ENCODE measurements at regions of chr2 and their contacts with region 1.

Region 1: GRCh38 chr2:37802899-37803379 is 122.1 kb upstream of the RMDN2 start:
- DNase-seq: peak in 1 of 2 experiments; percentile 70
- H3K4me3 ChIP-seq: no peak overlapping the region
- H3K4me3 Mint-ChIP-seq: peak overlapping the region; percentile 19
- H3K27ac Mint-ChIP-seq: peak overlapping the region; percentile 77
- H3K4me1 ChIP-seq: peaks cover 47% of the 10 kb centered on the region
- H3K4me1 Mint-ChIP-seq: peaks cover 38% of the 10 kb centered on the region
- H3K27me3 ChIP-seq: no peaks in the 10 kb centered on the region
- H3K27me3 Mint-ChIP-seq: no peaks in the 10 kb centered on the region
- CTCF ChIP-seq: no peak

Region 2: DNA sequence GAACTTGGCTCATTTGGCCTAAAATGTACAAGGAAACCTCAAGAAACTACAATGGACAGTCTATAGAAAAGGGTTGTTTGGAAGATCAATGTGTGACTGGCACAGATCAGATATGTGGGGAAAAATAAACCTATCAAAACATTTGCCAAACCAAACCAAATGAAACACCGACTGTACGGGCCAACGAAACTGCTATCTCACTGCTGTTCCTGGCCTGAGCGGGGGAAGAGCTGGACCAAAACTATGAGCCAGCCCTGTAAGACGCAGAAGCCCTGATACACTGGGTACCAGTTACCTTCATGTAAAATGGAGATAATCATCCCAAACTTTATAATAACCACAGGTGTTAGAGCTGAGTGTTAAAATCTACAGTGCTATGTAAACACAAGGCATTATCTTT is 143.2 kb before region 1 on chr2:
- CTCF ChIA-PET with region 1: no interaction called
- POLR2A ChIA-PET with region 1: no interaction called
- intact Hi-C with region 1: loop called (anchors 1 kb)
- DNase-seq: no peak
- H3K4me3 ChIP-seq: no peak overlapping the region
- H3K4me3 Mint-ChIP-seq: peak overlapping the region; percentile 47
- H3K27ac Mint-ChIP-seq: peak overlapping the region; percentile 35
- H3K4me1 ChIP-seq: peaks cover 66% of the 10 kb centered on the region
- H3K4me1 Mint-ChIP-seq: peaks cover 60% of the 10 kb centered on the region
- H3K27me3 ChIP-seq: no peaks in the 10 kb centered on the region
- H3K27me3 Mint-ChIP-seq: no peaks in the 10 kb centered on the region
- CTCF ChIP-seq: no peak

Region 3: GRCh38 chr2:37688771-37689468 is 114.0 kb before region 1 on chr2:
- CTCF ChIA-PET with region 1: no interaction called
- POLR2A ChIA-PET with region 1: no interaction called
- intact Hi-C with region 1: loop called (anchors 5 kb)
- DNase-seq: peak; percentile 74 to 82
- H3K4me3 ChIP-seq: no peak overlapping the region
- H3K4me3 Mint-ChIP-seq: peak overlapping the region; percentile 36
- H3K27ac Mint-ChIP-seq: peak overlapping the region; percentile 70
- H3K4me1 ChIP-seq: peaks cover 26% of the 10 kb centered on the region
- H3K4me1 Mint-ChIP-seq: peaks cover 31% of the 10 kb centered on the region
- H3K27me3 ChIP-seq: no peaks in the 10 kb centered on the region
- H3K27me3 Mint-ChIP-seq: no peaks in the 10 kb centered on the region
- CTCF ChIP-seq: no peak

Region 4: DNA sequence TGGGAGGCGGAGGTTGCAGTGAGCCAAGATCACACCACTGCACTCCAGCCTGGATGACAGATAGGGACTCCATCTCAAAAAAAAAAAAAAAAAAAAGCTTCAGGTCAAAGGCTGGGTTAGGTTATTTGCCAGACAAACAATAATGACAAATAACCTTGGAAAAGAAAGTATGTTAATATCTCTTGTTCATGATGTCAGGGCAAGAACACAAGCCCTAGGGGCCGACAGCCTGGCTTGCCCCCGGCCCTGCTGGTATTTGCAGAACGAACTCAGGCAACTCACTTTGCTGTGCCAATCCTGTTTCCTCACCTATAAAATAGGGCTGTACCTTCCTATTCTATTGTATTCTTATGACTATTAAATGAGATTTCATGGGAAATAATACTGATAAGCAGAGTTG is 56.1 kb before region 1 on chr2:
- CTCF ChIA-PET with region 1: no interaction called
- POLR2A ChIA-PET with region 1: no interaction called
- intact Hi-C with region 1: loop called (anchors 2 kb)
- DNase-seq: peak in 1 of 2 experiments; percentile 30
- H3K4me3 ChIP-seq: no peak overlapping the region
- H3K4me3 Mint-ChIP-seq: no peak overlapping the region
- H3K27ac Mint-ChIP-seq: no peak overlapping the region
- H3K4me1 ChIP-seq: peaks cover 6% of the 10 kb centered on the region; the same call in 1 of the 2 replicates
- H3K4me1 Mint-ChIP-seq: peaks cover 13% of the 10 kb centered on the region
- H3K27me3 ChIP-seq: no peaks in the 10 kb centered on the region
- H3K27me3 Mint-ChIP-seq: no peaks in the 10 kb centered on the region
- CTCF ChIP-seq: no peak

Region 5: GRCh38 chr2:37776487-37776886 is 26.5 kb before region 1 on chr2:
- CTCF ChIA-PET with region 1: no interaction called
- POLR2A ChIA-PET with region 1: interaction called, 3 read pairs
- intact Hi-C with region 1: loop called (anchors 2 kb)
- DNase-seq: peak; percentile 29 to 65
- H3K4me3 ChIP-seq: no peak overlapping the region
- H3K4me3 Mint-ChIP-seq: no peak overlapping the region
- H3K27ac Mint-ChIP-seq: peak overlapping the region; percentile 58
- H3K4me1 ChIP-seq: peaks cover 70% of the 10 kb centered on the region
- H3K4me1 Mint-ChIP-seq: peaks cover 68% of the 10 kb centered on the region
- H3K27me3 ChIP-seq: no peaks in the 10 kb centered on the region
- H3K27me3 Mint-ChIP-seq: no peaks in the 10 kb centered on the region
- CTCF ChIP-seq: no peak

Measured in Caco-2 (cell line).